IMR-90 (cell line): ENCODE measurements at regions of chr13 and their contacts with region 1.

Region 1: DNA sequence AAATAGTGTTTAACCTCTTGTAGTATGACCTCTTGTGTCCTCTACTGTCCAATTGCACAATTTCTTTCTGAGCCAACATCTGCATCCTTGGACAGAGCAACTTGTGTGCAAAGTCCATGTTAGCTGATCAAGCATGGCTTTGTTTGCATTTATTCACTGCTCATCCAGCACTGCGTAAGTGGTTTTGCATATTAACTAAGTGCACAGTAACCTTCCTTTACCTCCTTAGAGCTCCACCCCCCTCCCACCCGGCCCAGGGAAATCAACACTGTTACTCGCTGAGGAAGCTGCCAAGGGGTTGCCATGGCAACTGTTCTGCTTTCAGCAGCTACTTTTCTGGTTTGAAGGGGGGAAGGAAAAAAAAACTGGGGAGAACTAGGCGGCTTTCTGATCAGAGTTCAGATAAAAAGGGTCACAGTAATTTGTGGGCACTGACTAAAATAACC is 153.5 kb upstream of the KLF12 start:
- DNase-seq: peak; percentile 64
- ATAC-seq: peak; percentile 71
- H3K4me3 ChIP-seq: no peak overlapping the region
- H3K27ac ChIP-seq: no peak overlapping the region
- H3K4me1 ChIP-seq: peaks cover 2% of the 10 kb centered on the region
- H3K27me3 ChIP-seq: no peaks in the 10 kb centered on the region
- CTCF ChIP-seq: no peak
- POLR2A ChIP-seq: no peak
- RAD21 ChIP-seq: no peak

Region 2: DNA sequence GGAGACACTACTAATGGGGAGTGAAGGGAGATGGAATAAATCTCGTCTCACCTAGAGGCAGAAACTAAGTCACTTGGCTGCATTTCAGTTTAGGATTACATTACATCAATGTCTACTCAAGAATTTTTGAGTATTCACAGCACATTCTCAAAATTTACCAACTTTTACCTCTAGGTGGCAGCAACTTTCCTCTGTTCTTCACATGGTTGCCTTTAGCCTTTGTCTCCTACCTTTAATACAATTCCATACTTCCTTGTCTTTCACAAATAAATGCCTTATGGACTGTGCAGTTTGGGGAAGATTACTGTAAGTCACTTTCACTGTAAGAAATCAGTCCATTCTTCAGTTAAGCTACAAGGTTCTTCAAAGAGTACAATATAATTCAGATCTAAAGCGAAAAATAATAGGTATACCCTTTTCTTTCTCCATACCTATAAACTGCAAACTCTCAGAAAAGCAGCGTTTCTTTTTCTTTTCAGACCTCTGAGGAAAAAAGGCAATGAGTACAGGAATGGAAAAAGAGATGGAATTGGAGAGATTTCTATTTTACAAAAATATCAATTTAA is 532.9 kb before region 1 on chr13:
- CTCF ChIA-PET with region 1: no interaction called
- POLR2A ChIA-PET with region 1: no interaction called
- dilution Hi-C with region 1: no loop called
- in situ Hi-C with region 1: no loop called
- intact Hi-C with region 1: loop called (anchors 2 kb)
- DNase-seq: peak; percentile 70
- ATAC-seq: peak; percentile 79
- H3K4me3 ChIP-seq: no peak overlapping the region
- H3K27ac ChIP-seq: no peak overlapping the region
- H3K4me1 ChIP-seq: no peaks in the 10 kb centered on the region
- H3K27me3 ChIP-seq: no peaks in the 10 kb centered on the region
- CTCF ChIP-seq: peak; percentile 75
- POLR2A ChIP-seq: no peak
- RAD21 ChIP-seq: peak; percentile 81

Region 3: DNA sequence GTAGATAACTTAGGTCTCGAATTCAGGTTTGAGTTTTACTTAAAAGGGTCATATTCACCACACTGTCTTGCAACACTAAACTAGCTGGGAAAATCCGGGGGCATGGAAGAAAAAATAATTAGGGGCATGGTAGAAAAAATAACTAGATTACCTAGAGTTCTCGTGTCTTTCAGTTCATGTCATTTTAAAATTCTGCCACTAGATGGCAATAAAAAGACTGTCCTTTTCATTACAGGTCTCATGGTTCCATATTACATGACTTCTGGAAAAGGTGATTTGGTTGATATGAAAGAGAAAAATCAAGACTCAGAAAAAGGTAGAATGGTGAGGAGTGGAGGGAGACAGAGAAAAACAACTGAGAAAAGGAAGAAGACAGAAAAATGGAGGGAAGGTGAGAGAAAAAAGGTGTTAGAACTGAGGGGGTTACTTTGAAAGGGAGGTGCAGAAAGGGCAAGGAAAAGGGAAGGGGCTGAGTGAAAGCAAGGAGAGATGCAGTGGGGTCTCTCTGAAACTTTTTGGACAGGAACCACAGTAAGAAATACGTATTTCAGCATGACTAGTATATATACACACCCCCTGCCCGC is 452.5 kb before region 1 on chr13:
- CTCF ChIA-PET with region 1: interaction called, 5 read pairs
- POLR2A ChIA-PET with region 1: no interaction called
- dilution Hi-C with region 1: no loop called
- in situ Hi-C with region 1: loop called (anchors 25 kb)
- intact Hi-C with region 1: loop called (anchors 1 kb)
- DNase-seq: peak; percentile 56
- ATAC-seq: peak; percentile 79; the same call in 1 of the 2 replicates
- H3K4me3 ChIP-seq: no peak overlapping the region
- H3K27ac ChIP-seq: no peak overlapping the region
- H3K4me1 ChIP-seq: peaks cover 6% of the 10 kb centered on the region
- H3K27me3 ChIP-seq: no peaks in the 10 kb centered on the region
- CTCF ChIP-seq: peak; percentile 63
- POLR2A ChIP-seq: no peak
- RAD21 ChIP-seq: peak; percentile 70

Region 4: GRCh38 chr13:73945871-73946270 is 341.9 kb before region 1 on chr13:
- CTCF ChIA-PET with region 1: no interaction called
- POLR2A ChIA-PET with region 1: no interaction called
- dilution Hi-C with region 1: no loop called
- in situ Hi-C with region 1: no loop called
- intact Hi-C with region 1: loop called (anchors 5 kb)
- DNase-seq: no peak
- ATAC-seq: no peak; the same call in 1 of the 2 replicates
- H3K4me3 ChIP-seq: no peak overlapping the region
- H3K27ac ChIP-seq: no peak overlapping the region; the same call in 1 of the 2 replicates
- H3K4me1 ChIP-seq: peaks cover 3% of the 10 kb centered on the region
- H3K27me3 ChIP-seq: no peaks in the 10 kb centered on the region
- CTCF ChIP-seq: no peak
- POLR2A ChIP-seq: no peak
- RAD21 ChIP-seq: no peak

Region 5: DNA sequence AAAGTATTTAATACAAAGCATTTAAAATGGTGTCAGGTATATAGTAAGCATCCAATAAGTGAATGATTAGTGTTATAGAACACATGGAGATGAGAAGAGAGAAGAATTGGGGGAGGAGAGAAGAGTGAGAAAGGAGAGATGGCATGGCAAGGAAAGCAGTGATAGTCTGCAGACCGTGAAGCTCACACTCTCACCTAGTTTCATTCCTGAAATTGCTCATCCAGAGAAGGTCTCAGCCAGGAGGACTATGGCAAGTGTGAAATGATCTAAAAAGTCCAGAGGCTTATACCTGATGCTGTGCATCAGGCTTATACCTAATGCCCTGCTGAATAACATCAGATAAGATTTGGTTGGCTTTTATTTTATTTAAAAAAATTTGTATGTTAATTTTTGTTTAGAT is 198.0 kb after region 1 on chr13:
- CTCF ChIA-PET with region 1: no interaction called
- POLR2A ChIA-PET with region 1: no interaction called
- dilution Hi-C with region 1: no loop called
- in situ Hi-C with region 1: no loop called
- intact Hi-C with region 1: no loop called
- DNase-seq: no peak
- ATAC-seq: no peak
- H3K4me3 ChIP-seq: no peak overlapping the region
- H3K27ac ChIP-seq: no peak overlapping the region
- H3K4me1 ChIP-seq: no peaks in the 10 kb centered on the region
- H3K27me3 ChIP-seq: peaks cover 2% of the 10 kb centered on the region; the same call in 1 of the 2 replicates
- CTCF ChIP-seq: no peak
- POLR2A ChIP-seq: no peak
- RAD21 ChIP-seq: no peak

Region 6: DNA sequence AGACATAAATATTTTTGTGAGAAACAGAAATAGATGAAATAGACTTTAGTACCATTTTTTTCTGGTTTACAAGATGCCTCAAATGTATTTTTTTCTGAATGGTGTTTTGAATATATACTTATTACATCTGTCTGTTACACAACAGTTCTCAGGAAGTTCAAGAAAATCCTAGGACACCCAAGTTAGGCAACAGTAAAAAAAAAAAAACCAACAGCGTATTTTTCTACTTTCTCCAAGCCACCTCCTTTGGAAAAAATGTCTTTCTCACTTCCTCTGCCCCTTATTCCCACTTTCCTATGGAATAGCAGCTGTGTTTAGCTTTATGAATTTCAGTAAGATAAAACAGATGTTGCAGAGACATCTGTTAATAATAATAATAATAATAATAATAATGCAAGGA is 336.0 kb after region 1 on chr13:
- CTCF ChIA-PET with region 1: no interaction called
- POLR2A ChIA-PET with region 1: no interaction called
- dilution Hi-C with region 1: no loop called
- in situ Hi-C with region 1: no loop called
- intact Hi-C with region 1: no loop called
- DNase-seq: no peak
- ATAC-seq: no peak
- H3K4me3 ChIP-seq: no peak overlapping the region
- H3K27ac ChIP-seq: no peak overlapping the region
- H3K4me1 ChIP-seq: no peaks in the 10 kb centered on the region
- H3K27me3 ChIP-seq: no peaks in the 10 kb centered on the region
- CTCF ChIP-seq: no peak
- POLR2A ChIP-seq: no peak
- RAD21 ChIP-seq: no peak